Activated CD4-positive, alpha-beta T cell treated with anti-CD3 and anti-CD28 coated beads for 36 hours (primary cell): ENCODE measurements at regions of chr2 and their contacts with region 1.

Region 1: GRCh38 chr2:216498418-216499413 is at the start of gene RPL37A:
- DNase-seq: peak; percentile 95
- ATAC-seq: peak; percentile 96
- H3K4me3 Mint-ChIP-seq: peak within 1 kb of the TSS; percentile 98
- H3K27ac Mint-ChIP-seq: peak within 1 kb of the TSS; percentile 96
- H3K4me1 Mint-ChIP-seq: peaks cover 45% of the 10 kb centered on the region
- H3K27me3 Mint-ChIP-seq: no peaks in the 10 kb centered on the region
- total RNA-seq, gene RPL37A: 3,228 to 4,134 TPM

Region 2: DNA sequence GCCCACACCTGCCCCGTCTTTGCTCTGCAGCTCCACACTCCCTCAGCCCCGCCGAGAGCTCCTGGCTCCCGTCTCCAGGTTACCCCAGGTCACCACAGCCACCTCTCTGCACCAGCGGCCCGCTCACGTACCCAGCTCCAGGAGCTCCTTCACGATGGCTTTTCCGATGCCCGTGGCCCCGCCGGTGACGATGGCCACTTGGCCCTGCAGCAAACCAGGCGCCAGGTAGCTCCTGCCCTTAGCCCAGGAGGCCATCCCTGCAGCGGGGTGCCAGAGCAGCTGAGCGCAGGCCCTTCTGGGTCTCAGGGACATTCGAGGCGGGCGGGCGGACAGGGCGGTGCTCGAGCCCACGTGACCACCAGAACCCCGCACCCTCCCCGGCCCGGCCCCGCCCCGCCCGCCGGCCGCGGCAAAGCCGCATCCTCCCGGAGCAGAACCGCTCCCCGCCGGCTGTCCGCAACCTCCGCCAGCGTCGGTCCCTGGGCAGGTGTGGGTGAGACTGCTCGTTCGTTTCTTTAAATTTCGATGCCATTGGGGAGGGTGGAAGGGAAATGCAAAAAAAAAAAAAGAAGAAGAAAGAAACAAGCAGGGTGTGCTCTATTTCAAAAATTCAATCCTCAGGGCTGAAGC is 417.1 kb before region 1 on chr2 and contains the starts of genes PECR and TMEM169:
- CTCF ChIA-PET with region 1: no interaction called
- POLR2A ChIA-PET with region 1: no interaction called
- intact Hi-C with region 1: loop called in 1 of 2 experiments (anchors 1 kb)
- DNase-seq: peak; percentile 89
- ATAC-seq: peak; percentile 93
- H3K4me3 Mint-ChIP-seq: peak within 1 kb of the TSS; percentile 81
- H3K27ac Mint-ChIP-seq: peak within 1 kb of the TSS; percentile 81
- H3K4me1 Mint-ChIP-seq: peaks cover 59% of the 10 kb centered on the region
- H3K27me3 Mint-ChIP-seq: no peaks in the 10 kb centered on the region
- total RNA-seq, gene PECR: 17.0 to 20.8 TPM
- total RNA-seq, gene TMEM169: 1.6 to 1.8 TPM

Region 3: DNA sequence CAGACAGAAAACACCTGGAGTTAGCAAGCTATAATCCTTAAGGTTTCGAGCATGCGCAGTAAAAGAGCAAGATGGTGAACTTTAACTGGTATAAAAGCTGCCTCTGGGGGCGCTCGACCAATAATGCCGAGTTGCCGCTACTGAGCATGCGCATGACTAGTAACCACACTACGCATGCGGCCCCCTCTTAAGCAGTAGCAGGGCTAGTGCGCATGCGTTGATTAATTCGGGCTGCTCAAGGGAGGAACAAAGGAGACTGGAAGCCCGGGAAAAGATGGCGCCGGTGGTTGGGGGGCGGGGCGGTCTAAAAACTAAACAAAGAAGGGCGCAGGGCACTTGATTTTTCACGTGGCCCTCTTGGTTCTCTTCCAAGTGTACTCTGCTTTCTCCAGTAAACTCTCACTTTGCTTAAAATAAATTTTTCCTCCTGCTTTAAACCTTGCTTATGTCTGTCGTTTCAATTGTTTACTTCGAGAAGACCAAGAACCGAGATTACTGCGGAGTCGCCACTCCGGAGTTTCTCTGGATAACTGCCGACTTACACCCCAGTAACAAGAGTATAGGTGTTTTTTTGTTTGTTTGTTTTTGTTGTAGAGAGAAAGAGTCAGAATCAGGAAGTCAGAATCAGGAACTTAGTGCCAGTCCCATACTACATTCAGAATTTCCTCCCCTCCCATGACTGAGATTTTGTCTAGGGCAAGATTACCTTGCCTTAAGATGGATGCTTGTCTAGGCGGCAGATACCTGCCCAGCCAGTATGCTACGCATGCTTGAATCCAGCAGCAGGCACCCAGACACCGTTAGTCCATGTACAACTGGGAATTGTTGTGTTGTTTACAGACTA is 383.8 kb before region 1 on chr2:
- CTCF ChIA-PET with region 1: no interaction called
- POLR2A ChIA-PET with region 1: interaction called, 3 read pairs
- intact Hi-C with region 1: loop called in 1 of 2 experiments (anchors 5 kb)
- DNase-seq: peak; percentile 98
- ATAC-seq: peak; percentile 81
- H3K4me3 Mint-ChIP-seq: peak overlapping the region; percentile 79
- H3K27ac Mint-ChIP-seq: peak overlapping the region; percentile 95
- H3K4me1 Mint-ChIP-seq: peaks cover 95% of the 10 kb centered on the region
- H3K27me3 Mint-ChIP-seq: no peaks in the 10 kb centered on the region

Region 4: DNA sequence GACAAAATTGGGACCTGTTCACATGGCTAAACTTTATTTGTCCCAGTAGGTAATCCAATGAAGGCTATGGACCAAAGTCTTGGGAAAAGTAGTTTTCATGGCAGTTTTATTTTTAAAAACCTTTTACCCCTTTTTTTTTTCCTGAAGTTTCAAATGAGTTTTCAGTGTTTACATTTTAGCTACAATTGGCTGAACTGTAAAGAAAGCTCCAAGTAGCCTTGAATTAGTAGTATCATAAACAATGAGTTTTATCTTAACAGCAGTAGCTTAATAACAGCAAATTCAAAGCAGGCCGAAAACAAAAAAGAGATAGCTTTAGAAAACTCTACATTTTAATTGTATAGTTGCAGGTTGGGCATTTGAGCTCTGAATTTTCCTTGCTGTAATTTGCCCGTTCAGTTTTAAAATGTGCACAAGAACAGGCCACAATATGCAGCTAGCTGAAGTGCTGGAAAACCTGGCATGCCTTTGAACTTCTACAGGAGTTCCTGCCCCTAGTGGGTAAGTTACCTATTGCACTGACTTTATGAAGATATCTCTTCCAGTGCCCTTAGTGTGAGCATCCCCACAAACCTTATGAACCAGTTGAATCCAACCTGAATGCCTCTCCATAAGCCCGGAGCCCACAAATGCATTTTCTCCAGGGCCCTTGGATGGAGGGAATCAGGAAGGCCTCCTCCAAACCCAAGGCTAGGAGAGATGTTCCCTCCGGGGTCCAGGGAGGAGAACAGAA is 282.9 kb before region 1 on chr2:
- CTCF ChIA-PET with region 1: no interaction called
- POLR2A ChIA-PET with region 1: no interaction called
- intact Hi-C with region 1: loop called in 1 of 2 experiments (anchors 5 kb)
- DNase-seq: no peak
- ATAC-seq: no peak
- H3K4me3 Mint-ChIP-seq: no peak overlapping the region
- H3K27ac Mint-ChIP-seq: no peak overlapping the region
- H3K4me1 Mint-ChIP-seq: peaks cover 28% of the 10 kb centered on the region
- H3K27me3 Mint-ChIP-seq: no peaks in the 10 kb centered on the region

Region 5: DNA sequence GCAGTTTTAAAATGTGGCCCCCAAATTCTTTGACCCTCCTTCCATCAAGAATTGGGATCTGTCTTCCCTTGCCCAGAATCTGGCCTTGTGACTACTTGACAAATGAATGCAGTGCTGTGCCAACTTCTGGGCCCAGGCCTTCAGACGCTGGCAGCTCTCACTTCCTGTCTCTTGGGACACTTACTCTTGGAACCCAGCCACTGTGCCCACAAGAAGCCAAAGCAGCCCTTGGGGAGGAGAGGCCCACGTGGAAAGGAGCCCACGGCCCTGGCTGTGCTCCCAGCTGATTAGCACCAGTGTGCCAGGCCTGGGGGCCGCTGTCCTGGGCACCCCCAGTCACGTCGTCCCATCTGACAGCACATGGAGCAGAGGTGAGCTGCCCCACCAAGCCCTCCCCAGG is 56.6 kb after region 1 on chr2:
- CTCF ChIA-PET with region 1: no interaction called
- POLR2A ChIA-PET with region 1: no interaction called
- intact Hi-C with region 1: no loop called
- DNase-seq: no peak
- ATAC-seq: no peak
- H3K4me3 Mint-ChIP-seq: no peak overlapping the region
- H3K27ac Mint-ChIP-seq: no peak overlapping the region
- H3K4me1 Mint-ChIP-seq: no peaks in the 10 kb centered on the region
- H3K27me3 Mint-ChIP-seq: peaks cover 2% of the 10 kb centered on the region

Region 6: DNA sequence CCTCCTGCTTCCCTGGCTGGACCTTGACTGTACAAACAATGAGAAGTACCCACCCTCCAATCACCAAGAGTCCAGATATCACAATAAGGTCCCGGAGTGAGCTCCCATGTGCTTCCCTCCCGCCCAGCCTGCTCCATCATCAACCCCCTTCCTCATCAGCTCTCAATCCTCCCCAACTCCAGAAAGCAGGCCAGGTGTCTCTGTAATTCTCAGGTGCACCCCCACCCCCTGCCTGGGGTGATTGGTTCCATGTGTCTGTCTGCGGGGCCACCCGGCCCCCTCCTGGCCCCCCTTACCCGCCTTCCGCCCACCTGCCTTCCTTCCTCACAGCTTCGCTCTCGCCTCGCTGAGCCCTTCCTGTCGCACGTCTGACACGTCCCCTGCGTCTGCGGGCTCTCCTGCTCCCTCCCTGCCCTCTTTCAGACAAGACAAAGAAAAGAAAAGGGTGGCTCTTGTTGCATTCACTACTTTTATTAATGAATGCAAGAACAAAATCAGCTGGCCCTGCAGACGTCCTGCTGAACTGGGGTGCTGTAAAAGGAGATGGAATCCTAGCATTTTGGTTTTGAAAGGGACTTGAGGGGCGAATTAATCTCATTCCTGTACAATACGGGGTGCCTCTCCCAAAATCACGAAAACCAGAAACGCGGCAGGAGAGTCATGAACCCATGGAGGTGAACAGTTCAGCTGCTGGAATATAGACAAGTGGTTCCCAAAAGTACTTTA is 108.0 kb after region 1 on chr2:
- CTCF ChIA-PET with region 1: no interaction called
- POLR2A ChIA-PET with region 1: no interaction called
- intact Hi-C with region 1: loop called in 1 of 2 experiments (anchors 1 kb)
- DNase-seq: peak; percentile 93
- ATAC-seq: peak; percentile 95
- H3K4me3 Mint-ChIP-seq: peak overlapping the region; percentile 76
- H3K27ac Mint-ChIP-seq: peak overlapping the region; percentile 93
- H3K4me1 Mint-ChIP-seq: peaks cover 14% of the 10 kb centered on the region
- H3K27me3 Mint-ChIP-seq: peaks cover 5% of the 10 kb centered on the region

Region 7: GRCh38 chr2:217118559-217119284 is 620.0 kb after region 1 on chr2:
- CTCF ChIA-PET with region 1: no interaction called
- POLR2A ChIA-PET with region 1: no interaction called
- intact Hi-C with region 1: no loop called
- DNase-seq: no peak
- ATAC-seq: no peak
- H3K4me3 Mint-ChIP-seq: no peak overlapping the region
- H3K27ac Mint-ChIP-seq: no peak overlapping the region
- H3K4me1 Mint-ChIP-seq: no peaks in the 10 kb centered on the region
- H3K27me3 Mint-ChIP-seq: peaks cover 10% of the 10 kb centered on the region